ENCODE measurements at regions of chr1 and their contacts with region 1.

Region 1: DNA sequence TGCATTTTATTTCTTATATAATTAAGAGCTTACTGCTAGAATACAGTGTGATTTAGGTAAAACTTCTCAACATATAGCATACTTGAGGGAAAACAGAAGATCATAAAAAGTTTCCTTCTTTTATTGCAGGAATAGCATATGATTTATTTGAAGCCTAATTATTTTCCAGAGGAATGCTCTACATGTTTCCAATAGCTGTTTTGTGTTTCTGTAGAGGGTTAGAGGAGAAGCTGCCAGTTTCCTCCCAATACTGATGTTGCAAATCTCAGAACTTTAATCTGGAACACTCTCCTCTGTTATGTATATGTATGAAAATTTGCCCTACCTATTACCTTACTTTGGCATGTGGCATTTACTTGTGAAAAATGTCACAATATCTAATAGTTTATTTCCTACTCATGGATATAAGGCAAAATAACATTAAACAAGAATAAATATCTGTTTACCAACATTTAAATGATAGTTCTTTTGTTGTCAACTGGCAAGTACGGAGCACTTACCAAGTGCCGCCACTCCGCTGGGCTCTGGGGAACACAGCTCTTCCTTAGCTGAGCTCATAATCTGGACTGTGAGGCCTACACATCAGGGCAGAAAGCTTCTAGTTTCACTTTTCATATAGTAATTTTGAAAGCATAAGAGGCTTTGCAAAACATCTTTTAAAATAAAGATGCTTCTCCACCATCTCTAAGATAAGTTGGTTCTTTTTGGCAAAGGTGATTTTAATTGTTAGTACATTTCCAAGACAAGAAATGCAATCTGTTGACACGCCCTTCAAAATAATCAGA is 239.8 kb upstream of the C1orf105 start:
- DNase-seq: peak; percentile 72
- ATAC-seq: peak; percentile 74
- H3K4me3 ChIP-seq: peak overlapping the region in 3 of 5 experiments; percentile 32 to 50 (median 38)
- H3K4me3 Mint-ChIP-seq: peak overlapping the region; percentile 86
- H3K27ac ChIP-seq: peak overlapping the region; percentile 77 to 93
- H3K27ac Mint-ChIP-seq: peak overlapping the region; percentile 97
- H3K4me1 ChIP-seq: peaks cover 52 to 56% of the 10 kb centered on the region in 2 donors
- H3K4me1 Mint-ChIP-seq: peaks cover 46% of the 10 kb centered on the region
- H3K27me3 ChIP-seq: no peaks in the 10 kb centered on the region
- H3K27me3 Mint-ChIP-seq: no peaks in the 10 kb centered on the region
- CTCF ChIP-seq: no peak

Region 2: DNA sequence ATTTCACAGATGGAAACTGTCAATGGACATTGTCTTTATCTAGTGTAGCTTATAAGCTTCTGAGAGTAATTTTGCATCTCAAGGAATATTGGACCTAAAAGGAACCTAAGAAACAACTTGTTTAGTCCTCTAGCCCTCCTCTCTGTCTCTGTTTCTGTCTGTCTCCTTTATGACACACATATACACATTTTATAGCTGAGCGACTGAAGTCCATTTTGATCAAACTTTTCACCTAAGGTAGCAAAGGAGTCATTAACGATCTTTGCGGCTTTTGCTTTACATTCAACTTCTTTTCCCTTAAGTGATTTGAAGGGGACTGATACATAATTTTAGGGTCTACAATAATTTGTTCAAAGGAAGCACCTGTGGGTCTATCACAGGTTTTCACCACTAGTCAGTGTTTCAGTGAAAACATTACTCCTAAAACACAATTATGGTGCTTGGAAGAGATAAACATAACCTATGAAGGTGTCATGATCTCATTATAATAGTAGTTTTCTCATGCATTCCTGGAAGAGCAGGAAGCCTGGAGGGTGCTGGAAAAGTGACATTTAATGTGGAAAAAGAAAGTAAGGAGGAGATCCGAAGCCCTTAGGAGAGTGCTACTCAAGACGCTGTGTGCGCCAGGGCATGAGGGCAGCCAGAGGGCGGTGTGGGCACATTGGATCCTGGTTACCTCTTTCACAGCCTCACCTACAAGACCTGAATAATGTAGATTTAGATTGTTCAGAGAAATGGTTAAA is 90.8 kb before region 1 on chr1:
- CTCF ChIA-PET with region 1: interaction called, 14 read pairs
- POLR2A ChIA-PET with region 1: no interaction called
- intact Hi-C with region 1: loop called (anchors 5 kb)
- DNase-seq: peak; percentile 75
- ATAC-seq: peak; percentile 80
- H3K4me3 ChIP-seq: peak overlapping the region in 1 of 5 experiments; percentile 7
- H3K4me3 Mint-ChIP-seq: no peak overlapping the region
- H3K27ac ChIP-seq: no peak overlapping the region
- H3K27ac Mint-ChIP-seq: no peak overlapping the region
- H3K4me1 ChIP-seq: no peaks in the 10 kb centered on the region
- H3K4me1 Mint-ChIP-seq: peaks cover 9% of the 10 kb centered on the region
- H3K27me3 ChIP-seq: no peaks in the 10 kb centered on the region
- H3K27me3 Mint-ChIP-seq: no peaks in the 10 kb centered on the region
- CTCF ChIP-seq: peak; percentile 84

Region 3: DNA sequence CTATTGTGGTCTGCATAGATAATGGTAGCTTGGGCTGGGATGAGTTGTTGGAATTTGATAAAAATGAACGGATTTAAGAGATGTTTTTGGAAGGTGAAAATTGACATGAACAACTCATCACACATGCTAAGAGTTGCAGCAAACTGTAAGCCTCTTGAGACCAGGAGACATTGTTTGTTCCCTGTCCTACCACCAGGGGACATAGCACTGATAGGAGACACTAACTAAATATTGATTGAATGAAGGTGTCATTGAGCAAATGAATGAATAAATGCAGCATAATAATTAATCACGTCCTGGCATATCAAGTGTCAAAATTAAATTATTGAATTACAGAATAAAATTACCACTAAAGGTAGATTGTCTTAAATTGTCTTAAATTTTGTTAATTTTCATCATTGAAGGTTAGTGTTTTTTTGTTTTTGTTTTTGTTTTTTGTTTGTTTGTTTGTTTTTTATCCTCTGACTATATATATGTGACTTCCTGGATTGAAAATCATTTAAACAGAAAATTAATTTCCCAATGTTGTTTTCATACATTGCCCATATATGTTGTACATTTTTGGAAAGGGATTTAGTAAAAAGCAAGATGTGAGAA is 45.5 kb before region 1 on chr1:
- CTCF ChIA-PET with region 1: no interaction called
- POLR2A ChIA-PET with region 1: no interaction called
- intact Hi-C with region 1: loop called (anchors 10 kb)
- DNase-seq: peak; percentile 57
- ATAC-seq: no peak
- H3K4me3 ChIP-seq: no peak overlapping the region
- H3K4me3 Mint-ChIP-seq: no peak overlapping the region
- H3K27ac ChIP-seq: no peak overlapping the region
- H3K27ac Mint-ChIP-seq: no peak overlapping the region
- H3K4me1 ChIP-seq: no peaks in the 10 kb centered on the region
- H3K4me1 Mint-ChIP-seq: peaks cover 12% of the 10 kb centered on the region
- H3K27me3 ChIP-seq: no peaks in the 10 kb centered on the region
- H3K27me3 Mint-ChIP-seq: no peaks in the 10 kb centered on the region
- CTCF ChIP-seq: peak; percentile 82

Region 4: GRCh38 chr1:172154551-172154950 is 26.1 kb before region 1 on chr1:
- CTCF ChIA-PET with region 1: interaction called, 4 read pairs
- POLR2A ChIA-PET with region 1: no interaction called
- intact Hi-C with region 1: loop called (anchors 2 kb)
- DNase-seq: peak; percentile 30
- ATAC-seq: peak; percentile 88
- H3K4me3 ChIP-seq: peak overlapping the region in 1 of 5 experiments; percentile 11
- H3K4me3 Mint-ChIP-seq: peak overlapping the region; percentile 21
- H3K27ac ChIP-seq: peak overlapping the region; percentile 40 to 68
- H3K27ac Mint-ChIP-seq: peak overlapping the region; percentile 51
- H3K4me1 ChIP-seq: peaks cover 4 to 15% of the 10 kb centered on the region in 2 donors
- H3K4me1 Mint-ChIP-seq: peaks cover 15% of the 10 kb centered on the region
- H3K27me3 ChIP-seq: no peaks in the 10 kb centered on the region
- H3K27me3 Mint-ChIP-seq: no peaks in the 10 kb centered on the region
- CTCF ChIP-seq: no peak

Region 5: DNA sequence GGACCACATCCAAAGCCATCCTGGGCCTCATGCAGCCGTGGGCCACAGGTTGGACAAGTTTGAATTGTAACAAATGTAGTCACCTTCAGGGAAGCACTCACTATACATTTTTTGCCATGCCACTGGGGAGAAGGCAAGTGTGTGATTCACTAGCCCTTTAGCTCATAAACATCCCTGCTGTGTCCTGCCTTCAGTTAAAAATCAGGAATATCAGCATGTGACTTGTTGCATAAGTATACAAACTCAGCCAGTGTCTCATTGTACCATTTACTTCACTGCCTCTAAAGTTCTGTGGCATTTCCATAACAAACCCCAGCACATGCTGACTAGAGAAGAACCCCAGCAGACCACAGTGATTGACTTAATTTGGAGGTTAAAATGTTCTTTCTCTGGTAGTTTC is 97.8 kb after region 1 on chr1:
- CTCF ChIA-PET with region 1: no interaction called
- POLR2A ChIA-PET with region 1: no interaction called
- intact Hi-C with region 1: no loop called
- DNase-seq: no peak
- ATAC-seq: no peak
- H3K4me3 ChIP-seq: no peak overlapping the region
- H3K4me3 Mint-ChIP-seq: no peak overlapping the region
- H3K27ac ChIP-seq: no peak overlapping the region
- H3K27ac Mint-ChIP-seq: no peak overlapping the region
- H3K4me1 ChIP-seq: no peaks in the 10 kb centered on the region
- H3K4me1 Mint-ChIP-seq: peaks cover 8% of the 10 kb centered on the region
- H3K27me3 ChIP-seq: no peaks in the 10 kb centered on the region
- H3K27me3 Mint-ChIP-seq: no peaks in the 10 kb centered on the region
- CTCF ChIP-seq: no peak

Region 6: GRCh38 chr1:172343240-172344160 is 162.8 kb after region 1 on chr1:
- CTCF ChIA-PET with region 1: interaction called, 5 read pairs
- POLR2A ChIA-PET with region 1: no interaction called
- intact Hi-C with region 1: loop called (anchors 5 kb)
- DNase-seq: peak; percentile 45
- ATAC-seq: peak; percentile 51
- H3K4me3 ChIP-seq: peak overlapping the region in 2 of 5 experiments; percentile 6 to 27
- H3K4me3 Mint-ChIP-seq: peak overlapping the region; percentile 71
- H3K27ac ChIP-seq: peak overlapping the region; percentile 42 to 48
- H3K27ac Mint-ChIP-seq: peak overlapping the region; percentile 79
- H3K4me1 ChIP-seq: peaks cover 34 to 45% of the 10 kb centered on the region in 2 donors
- H3K4me1 Mint-ChIP-seq: peaks cover 60% of the 10 kb centered on the region
- H3K27me3 ChIP-seq: no peaks in the 10 kb centered on the region
- H3K27me3 Mint-ChIP-seq: no peaks in the 10 kb centered on the region
- CTCF ChIP-seq: no peak

Measured in B cell (primary cell).